ENCODE measurements at regions of chr1 and their contacts with region 1.

Region 1: DNA sequence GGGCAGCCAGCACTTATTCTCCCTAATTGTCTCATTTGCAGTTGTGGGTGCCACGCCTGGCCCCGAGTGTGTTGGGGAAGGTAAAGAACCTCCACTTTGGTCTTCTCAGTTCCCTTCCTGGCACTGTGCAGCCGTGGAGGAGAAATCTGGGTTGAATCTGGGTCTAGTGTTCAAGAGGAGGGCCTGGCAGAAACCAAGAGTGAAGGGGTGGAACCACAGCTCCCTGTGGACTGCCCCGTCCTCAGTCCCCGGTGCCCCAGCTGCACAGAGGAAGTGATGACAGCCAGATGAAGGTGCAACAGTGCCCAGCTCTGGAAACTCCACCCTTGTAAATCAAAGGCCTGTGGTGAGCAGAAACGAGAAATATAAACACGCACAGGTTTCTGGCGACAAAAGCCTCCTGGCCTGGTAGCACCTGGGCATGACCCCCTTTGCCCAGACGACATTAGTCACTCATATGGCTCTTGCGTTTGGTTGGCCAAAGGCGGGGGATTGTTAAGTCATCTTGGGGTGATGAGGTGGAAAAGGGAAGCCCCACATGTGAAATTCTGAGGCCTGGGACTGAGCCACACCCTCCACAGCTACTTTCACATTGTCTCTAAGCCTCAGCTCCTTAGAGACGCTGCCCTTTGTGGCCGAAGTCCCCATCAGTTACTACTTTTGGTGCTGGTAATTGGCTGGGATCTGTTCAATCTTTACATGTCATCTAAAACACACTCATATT is 4.2 kb upstream of the ECE1 start:
- DNase-seq: peak; percentile 90
- ATAC-seq: peak; percentile 67
- H3K4me3 Mint-ChIP-seq: peak overlapping the region; percentile 73
- H3K27ac Mint-ChIP-seq: peak overlapping the region; percentile 98
- H3K4me1 Mint-ChIP-seq: peaks cover 80% of the 10 kb centered on the region
- H3K27me3 Mint-ChIP-seq: no peaks in the 10 kb centered on the region

Region 2: DNA sequence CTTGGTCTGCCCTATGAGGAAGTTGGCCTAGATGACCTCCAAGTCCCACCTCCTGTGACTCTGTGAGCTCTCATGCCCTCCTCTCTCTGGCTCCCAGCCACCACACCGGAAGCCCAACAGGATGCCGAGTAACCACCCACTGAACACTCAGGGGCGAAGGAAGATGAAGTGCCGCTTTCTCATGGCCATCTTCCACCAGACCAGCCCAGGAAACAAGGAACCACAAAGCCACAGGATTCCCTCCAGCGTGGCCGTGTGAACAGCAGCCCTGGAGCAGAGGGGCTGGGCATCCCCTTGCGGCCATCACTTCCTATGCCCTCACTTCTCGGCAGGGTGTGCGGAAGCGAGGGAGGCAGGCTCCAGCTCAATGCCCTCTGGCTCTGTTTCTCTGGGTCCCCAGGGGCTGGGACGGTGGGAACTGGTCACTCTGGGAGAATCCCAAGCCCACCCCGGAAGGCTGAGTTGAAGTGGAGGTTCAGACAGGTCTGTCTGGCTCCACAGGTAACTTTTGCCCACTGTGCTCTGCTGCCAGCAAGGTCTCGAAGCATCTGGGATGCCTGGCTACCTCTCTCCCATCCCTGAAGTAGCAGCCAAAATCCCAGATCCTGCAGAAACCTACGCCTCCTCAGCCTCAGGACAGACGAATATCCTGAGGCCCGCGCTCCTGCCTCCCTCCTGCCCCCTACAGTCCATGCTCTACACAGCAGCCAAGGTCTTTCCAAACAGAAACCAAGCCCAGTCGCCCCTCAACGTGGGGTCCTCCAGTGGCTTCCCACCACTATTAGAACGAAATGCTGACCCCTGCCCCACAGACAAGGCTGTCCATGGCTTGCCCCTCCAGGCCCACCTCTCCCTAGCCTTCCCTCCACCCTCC is 40.0 kb after region 1 on chr1:
- CTCF ChIA-PET with region 1: interaction called, 10 read pairs
- DNase-seq: peak; percentile 93
- ATAC-seq: peak; percentile 94
- H3K4me3 Mint-ChIP-seq: peak overlapping the region; percentile 70
- H3K27ac Mint-ChIP-seq: peak overlapping the region; percentile 94
- H3K4me1 Mint-ChIP-seq: peaks cover 81% of the 10 kb centered on the region
- H3K27me3 Mint-ChIP-seq: no peaks in the 10 kb centered on the region